Ovary (tissue), 10 donors: ENCODE measurements at regions of chr12 and their contacts with region 1.

Region 1: GRCh38 chr12:54359033-54359761 is 5.1 kb downstream of the GPR84 start:
- DNase-seq: peak; percentile 95 to 98 (median 97)
- H3K4me3 ChIP-seq: peak overlapping the region; percentile 45
- H3K27ac ChIP-seq: peak overlapping the region; percentile 79 to 88
- H3K4me1 ChIP-seq: peaks cover 1% of the 10 kb centered on the region
- H3K27me3 ChIP-seq: no peaks in the 10 kb centered on the region
- CTCF ChIP-seq: no peak
- EP300 ChIP-seq: no peak
- POLR2A ChIP-seq: peak; percentile 35

Region 2: DNA sequence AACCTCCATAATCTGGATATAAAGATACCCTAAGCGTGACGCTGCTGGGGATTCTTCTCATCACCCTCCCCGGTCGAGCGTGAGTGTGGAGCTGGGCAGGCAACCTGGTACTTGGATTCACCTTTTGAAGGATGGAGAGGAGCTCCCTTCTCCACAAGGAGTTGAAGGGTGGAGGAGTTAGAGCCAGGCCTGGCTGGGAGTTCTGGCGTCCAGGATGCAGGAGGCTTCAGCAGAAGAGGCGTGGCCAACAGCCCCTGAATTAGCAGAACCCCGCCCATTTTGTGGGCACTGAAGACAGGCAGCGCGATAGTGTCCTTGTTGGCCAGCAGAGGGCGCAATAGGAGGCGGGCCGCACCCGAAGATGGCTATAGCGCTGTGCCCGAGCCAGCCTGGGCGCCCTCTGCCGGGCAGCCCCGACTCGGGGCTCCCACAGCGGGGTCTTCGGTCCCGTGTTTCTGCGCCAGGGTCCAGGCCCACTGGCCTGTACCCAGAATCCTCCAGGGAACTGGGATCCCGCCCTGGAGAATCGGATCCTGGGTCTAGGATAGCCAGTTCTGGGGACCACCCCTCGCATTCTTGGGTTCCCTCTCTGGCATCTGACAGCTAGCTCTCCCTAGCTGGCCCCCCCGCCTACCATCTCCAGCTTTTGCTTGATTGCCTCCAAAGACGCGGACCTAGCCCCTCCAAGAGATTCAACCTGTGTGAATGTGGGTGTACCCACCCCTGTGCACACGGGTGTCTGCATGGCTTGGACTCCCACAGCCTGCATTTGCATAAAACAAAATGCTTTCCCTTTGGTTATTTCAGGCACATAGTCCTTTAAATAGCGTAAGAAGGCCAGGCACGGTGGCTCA is 144.4 kb before region 1 on chr12:
- intact Hi-C with region 1: loop called in 3 of 4 experiments (anchors 2 to 5 kb)
- DNase-seq: peak; percentile 83 to 90 (median 86)
- H3K4me3 ChIP-seq: no peak overlapping the region
- H3K27ac ChIP-seq: no peak overlapping the region
- H3K4me1 ChIP-seq: peaks cover 4% of the 10 kb centered on the region
- H3K27me3 ChIP-seq: no peaks in the 10 kb centered on the region
- CTCF ChIP-seq: peak; percentile 76 to 89 (median 86)
- EP300 ChIP-seq: no peak
- POLR2A ChIP-seq: no peak

Region 3: GRCh38 chr12:54220092-54220557 is 139.1 kb before region 1 on chr12:
- intact Hi-C with region 1: loop called (anchors 2 to 5 kb)
- DNase-seq: peak; percentile 66 to 86 (median 84)
- H3K4me3 ChIP-seq: no peak overlapping the region
- H3K27ac ChIP-seq: no peak overlapping the region
- H3K4me1 ChIP-seq: peaks cover 4% of the 10 kb centered on the region
- H3K27me3 ChIP-seq: no peaks in the 10 kb centered on the region
- CTCF ChIP-seq: peak; percentile 51 to 89 (median 86)
- EP300 ChIP-seq: no peak
- POLR2A ChIP-seq: no peak

Region 4: GRCh38 chr12:54279866-54280467 is 79.2 kb before region 1 on chr12 and contains the start of gene CBX5:
- intact Hi-C with region 1: loop called in 2 of 4 experiments (anchors 5 to 10 kb)
- DNase-seq: peak; percentile 99 to 100 (median 100)
- H3K4me3 ChIP-seq: peak within 1 kb of the TSS; percentile 65
- H3K27ac ChIP-seq: peak within 1 kb of the TSS; percentile 89 to 96
- H3K4me1 ChIP-seq: peaks cover 6% of the 10 kb centered on the region
- H3K27me3 ChIP-seq: no peaks in the 10 kb centered on the region
- CTCF ChIP-seq: peak in 1 of 3 donors; percentile 8
- EP300 ChIP-seq: peak; percentile 85
- POLR2A ChIP-seq: peak; percentile 91
- total RNA-seq, gene CBX5: 30.3 to 119 (median 103) TPM